ENCODE measurements at regions of chr13 and their contacts with region 1.

Region 1: DNA sequence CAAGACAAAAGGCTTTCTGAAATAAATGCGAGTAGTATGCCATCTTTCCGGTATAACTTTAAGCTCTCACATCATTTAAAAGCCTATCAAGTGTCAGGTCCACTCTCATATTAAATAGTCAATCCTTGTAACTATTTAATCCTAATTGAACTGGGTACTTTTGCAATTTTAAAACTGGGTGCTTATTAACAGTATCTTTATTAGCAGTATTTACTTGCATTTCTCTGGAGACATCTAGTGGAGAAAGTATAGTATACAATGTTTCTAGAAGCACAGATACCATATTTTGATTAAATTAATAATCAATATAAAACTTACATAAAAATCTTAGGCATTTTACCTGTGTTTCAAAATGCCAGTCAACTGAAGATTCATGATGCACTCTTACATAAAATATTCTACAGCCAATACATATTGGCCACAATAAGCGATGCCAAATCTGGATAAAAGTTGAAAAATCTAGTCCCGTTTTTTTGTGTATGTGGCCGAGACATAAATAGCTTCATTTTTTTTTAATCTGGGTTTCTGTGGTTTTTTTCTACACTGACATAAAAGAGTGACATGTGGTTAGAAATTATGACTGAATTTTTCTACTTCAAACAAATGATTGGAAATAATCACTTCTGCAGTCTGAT is 4.3 kb upstream of the POSTN start:
- DNase-seq: no peak
- ATAC-seq: peak; percentile 56

Region 2: GRCh38 chr13:36310417-36311108 is 1292.3 kb before region 1 on chr13:
- intact Hi-C with region 1: no loop called
- DNase-seq: no peak
- ATAC-seq: no peak

Region 3: DNA sequence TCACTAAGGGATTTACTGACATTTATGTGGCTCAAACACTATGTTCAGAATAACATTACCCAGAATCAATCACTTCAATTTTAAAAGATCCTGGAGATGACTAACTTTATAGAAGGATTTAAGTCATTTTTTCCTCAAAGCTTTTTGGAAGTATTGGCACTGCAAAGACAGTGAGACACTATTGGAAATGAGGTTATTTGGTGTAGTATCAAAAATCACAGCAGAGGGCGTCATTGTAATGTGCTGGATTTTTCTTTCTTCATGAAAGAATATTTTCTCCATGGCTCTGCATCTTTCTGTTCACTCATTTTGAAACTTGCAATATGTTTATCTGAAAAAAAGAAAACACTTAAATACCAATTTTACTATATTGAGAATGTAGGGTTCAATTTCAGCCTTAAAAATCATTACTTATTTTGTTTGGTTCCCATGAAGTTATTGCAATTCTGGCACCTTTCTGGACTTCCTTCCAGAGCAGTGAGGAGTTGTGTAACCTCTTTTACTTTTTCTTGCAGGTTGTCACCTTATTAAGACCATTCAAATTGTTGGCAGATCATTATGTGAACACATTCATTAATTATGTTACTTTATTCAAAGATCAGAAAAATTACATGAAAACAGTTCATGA is 493.7 kb before region 1 on chr13:
- intact Hi-C with region 1: loop called (anchors 10 kb)
- DNase-seq: no peak
- ATAC-seq: no peak

Measured in sciatic nerve (tissue), 2 donors.